ENCODE measurements at regions of chr11 and their contacts with region 1.

Region 1: DNA sequence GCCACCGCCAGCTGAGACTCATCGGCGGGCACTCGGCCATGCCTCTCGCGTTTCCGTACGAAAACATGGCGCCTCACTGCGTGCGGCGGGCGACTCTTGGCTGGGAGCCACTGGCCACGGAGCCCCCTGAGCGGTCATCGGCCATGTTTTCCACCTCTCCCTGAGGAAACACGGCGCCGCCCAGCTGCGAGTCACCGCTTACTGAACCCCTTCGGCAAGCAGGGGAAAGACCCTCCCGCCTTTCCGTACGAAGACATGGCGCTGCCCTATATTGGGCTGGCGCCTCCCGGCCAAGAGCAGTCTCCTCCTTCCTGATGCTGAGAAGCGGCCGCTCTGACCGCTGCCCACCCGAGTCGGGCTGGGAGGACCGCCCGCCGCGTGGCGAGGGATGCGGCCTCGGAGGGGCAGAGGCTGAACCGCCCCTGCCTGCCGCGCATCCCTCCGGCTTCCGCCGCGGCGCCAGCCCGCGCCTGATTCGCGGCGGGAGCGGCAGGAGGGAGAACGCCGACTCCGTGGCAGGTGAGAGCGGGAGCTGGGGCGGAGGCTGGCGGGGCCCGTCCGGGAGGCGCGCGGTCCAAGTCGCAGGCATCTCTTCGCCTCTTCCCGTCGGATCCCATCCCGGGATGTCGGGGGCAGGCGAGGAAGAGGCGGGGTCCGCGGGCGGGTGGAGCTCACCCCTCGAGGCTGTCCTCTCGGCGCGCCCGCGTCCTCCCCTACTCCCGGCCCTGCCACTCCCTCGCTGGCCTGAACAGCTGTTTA is at the start of gene TCP11L1:
- DNase-seq: peak; percentile 89
- H3K4me3 ChIP-seq: peak within 1 kb of the TSS; percentile 88
- H3K27ac ChIP-seq: peak within 1 kb of the TSS; percentile 69
- H3K4me1 ChIP-seq: peaks cover 12% of the 10 kb centered on the region
- CTCF ChIP-seq: no peak
- total RNA-seq, gene TCP11L1: 22.7 and 24.6 TPM in 2 replicates

Region 2: GRCh38 chr11:32266601-32267000 is 772.9 kb before region 1 on chr11:
- CTCF ChIA-PET with region 1: no interaction called
- POLR2A ChIA-PET with region 1: no interaction called
- intact Hi-C with region 1: no loop called
- DNase-seq: no peak
- H3K4me3 ChIP-seq: no peak overlapping the region
- H3K27ac ChIP-seq: no peak overlapping the region
- H3K4me1 ChIP-seq: no peaks in the 10 kb centered on the region
- CTCF ChIP-seq: no peak

Region 3: GRCh38 chr11:32893343-32894148 is 145.9 kb before region 1 on chr11:
- CTCF ChIA-PET with region 1: no interaction called
- POLR2A ChIA-PET with region 1: interaction called, 12 read pairs
- intact Hi-C with region 1: loop called (anchors 10 kb)
- DNase-seq: peak; percentile 80
- H3K4me3 ChIP-seq: peak overlapping the region; percentile 86
- H3K27ac ChIP-seq: peak overlapping the region; percentile 82
- H3K4me1 ChIP-seq: peaks cover 26% of the 10 kb centered on the region
- CTCF ChIP-seq: peak; percentile 80

Region 4: DNA sequence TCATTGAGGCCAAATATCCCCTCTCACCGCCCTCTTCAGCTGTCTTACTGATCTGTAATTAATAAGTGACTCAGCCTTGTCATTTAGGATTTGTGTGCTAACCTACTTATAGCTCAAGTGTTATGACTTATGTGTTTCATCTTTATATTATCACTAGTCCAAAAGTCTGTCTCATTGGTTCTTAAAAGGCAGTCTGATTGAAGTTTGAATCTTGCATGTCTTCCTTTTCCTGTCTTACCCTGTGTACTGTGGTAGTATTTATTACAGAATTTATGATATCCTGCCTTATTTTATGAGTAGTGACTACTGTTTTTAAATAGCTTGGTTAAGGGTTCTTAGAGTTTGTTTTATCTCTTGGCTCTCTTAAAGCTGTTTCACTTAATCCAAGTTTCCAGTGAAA is 17.5 kb before region 1 on chr11:
- CTCF ChIA-PET with region 1: interaction called, 4 read pairs
- POLR2A ChIA-PET with region 1: interaction called, 19 read pairs
- intact Hi-C with region 1: no loop called
- DNase-seq: no peak
- H3K4me3 ChIP-seq: no peak overlapping the region
- H3K27ac ChIP-seq: no peak overlapping the region
- H3K4me1 ChIP-seq: no peaks in the 10 kb centered on the region
- CTCF ChIP-seq: no peak

Measured in OCI-LY7 (cell line).